ENCODE measurements at regions of chr15 and their contacts with region 1.

Region 1: GRCh38 chr15:74768771-74769342 is 13.0 kb upstream of the CSK start:
- DNase-seq: peak; percentile 78
- CTCF ChIP-seq: peak; percentile 74

Region 2: GRCh38 chr15:74373731-74374647 is 394.9 kb before region 1 on chr15:
- CTCF ChIA-PET with region 1: interaction called, 15 read pairs
- POLR2A ChIA-PET with region 1: no interaction called
- DNase-seq: peak; percentile 96
- CTCF ChIP-seq: peak; percentile 96

Region 3: GRCh38 chr15:74680456-74680855 is 88.4 kb before region 1 on chr15:
- CTCF ChIA-PET with region 1: interaction called, 17 read pairs
- POLR2A ChIA-PET with region 1: no interaction called
- DNase-seq: no peak
- CTCF ChIP-seq: no peak

Region 4: GRCh38 chr15:74752491-74753020 is 16.3 kb before region 1 on chr15:
- CTCF ChIA-PET with region 1: interaction called, 112 read pairs
- POLR2A ChIA-PET with region 1: no interaction called
- DNase-seq: no peak
- CTCF ChIP-seq: no peak

Region 5: DNA sequence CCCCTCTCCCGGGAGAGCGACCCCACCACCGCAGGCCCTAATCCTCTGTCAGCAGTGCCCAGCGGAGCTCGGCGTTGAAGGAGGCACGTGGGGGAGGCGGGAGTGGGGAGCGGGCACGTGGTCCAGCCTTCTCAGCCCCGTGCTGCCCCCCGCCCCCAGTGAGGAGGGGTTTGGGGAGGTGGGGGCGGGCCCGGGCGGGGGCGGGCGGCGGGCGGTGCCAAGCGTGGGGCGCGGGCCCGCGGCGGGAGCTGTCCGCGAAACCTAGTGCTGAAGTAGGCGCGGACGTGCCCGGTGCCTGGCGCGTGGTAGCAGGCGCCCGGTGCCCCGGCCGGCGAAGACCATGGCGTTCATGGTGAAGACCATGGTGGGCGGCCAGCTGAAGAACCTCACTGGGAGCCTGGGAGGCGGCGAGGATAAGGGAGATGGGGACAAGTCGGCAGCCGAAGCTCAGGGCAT is 57.5 kb after region 1 on chr15 and contains the start of gene CPLX3:
- CTCF ChIA-PET with region 1: interaction called, 17 read pairs
- POLR2A ChIA-PET with region 1: no interaction called
- DNase-seq: peak; percentile 69
- CTCF ChIP-seq: no peak

Region 6: GRCh38 chr15:74842581-74843444 is 74.0 kb after region 1 on chr15 and contains the start of gene ULK3:
- CTCF ChIA-PET with region 1: interaction called, 21 read pairs
- POLR2A ChIA-PET with region 1: no interaction called
- DNase-seq: peak; percentile 97
- CTCF ChIP-seq: peak; percentile 63

Region 7: GRCh38 chr15:74928771-74929198 is 159.9 kb after region 1 on chr15:
- CTCF ChIA-PET with region 1: no interaction called
- POLR2A ChIA-PET with region 1: no interaction called
- DNase-seq: no peak
- CTCF ChIP-seq: no peak

Region 8: DNA sequence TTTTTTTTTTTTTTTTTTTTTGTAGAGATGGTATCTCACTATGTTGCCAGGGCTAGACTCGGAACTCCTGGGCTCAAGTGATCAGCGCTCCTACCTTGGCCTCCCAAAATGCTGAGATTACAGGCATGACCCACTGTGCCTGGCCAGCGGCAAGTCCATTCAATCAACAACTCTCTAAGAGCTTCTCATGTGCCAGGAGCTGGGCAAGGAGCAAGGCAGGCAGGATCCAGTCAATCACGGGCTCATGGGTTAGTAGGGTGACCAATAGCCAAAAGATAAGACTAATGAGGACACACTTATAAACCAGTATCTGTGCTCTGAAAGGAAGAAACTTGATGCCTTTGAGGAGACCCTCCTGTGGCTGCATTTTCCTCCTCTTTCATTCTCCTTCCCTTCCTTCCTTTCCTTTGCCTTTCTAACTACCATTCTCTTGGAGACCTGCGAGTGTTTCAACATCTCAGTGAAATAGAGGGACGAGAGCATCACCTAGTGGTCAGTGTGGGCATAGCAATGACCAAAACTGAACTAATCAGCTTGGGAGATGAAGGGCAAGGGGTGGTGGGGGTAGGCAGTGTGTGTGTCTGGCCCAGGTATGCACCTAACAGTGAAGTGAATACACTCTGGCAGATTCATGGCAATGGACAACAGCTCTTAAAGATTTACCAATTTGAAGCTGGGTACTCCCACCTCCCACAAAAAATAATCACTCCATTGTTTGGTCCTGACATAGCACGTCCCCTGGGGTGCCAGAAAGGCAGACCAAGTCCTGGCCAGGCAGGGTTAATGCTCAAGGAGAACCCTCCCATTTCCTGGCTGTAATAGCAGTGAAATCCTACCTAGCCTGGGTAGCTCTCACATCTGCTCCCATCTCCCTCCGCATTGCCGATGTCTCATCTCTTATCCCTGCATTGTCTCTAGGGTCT is 181.5 kb after region 1 on chr15:
- CTCF ChIA-PET with region 1: interaction called, 200 read pairs
- POLR2A ChIA-PET with region 1: no interaction called
- DNase-seq: peak; percentile 73
- CTCF ChIP-seq: peak; percentile 98